CD4-positive, alpha-beta memory T cell (primary cell): ENCODE measurements at regions of chr9 and their contacts with region 1.

Region 1: GRCh38 chr9:122350638-122351355 is 20.0 kb upstream of the PTGS1 start:
- DNase-seq: peak; percentile 62 to 70 (median 65)
- H3K4me3 ChIP-seq: no peak overlapping the region
- H3K4me3 Mint-ChIP-seq: peak overlapping the region in 1 of 8 donors; percentile 23
- H3K27ac ChIP-seq: no peak overlapping the region
- H3K27ac Mint-ChIP-seq: no peak overlapping the region
- H3K4me1 ChIP-seq: peaks cover 7% of the 10 kb centered on the region
- H3K4me1 Mint-ChIP-seq: peaks cover 0 to 7% (median 3%) of the 10 kb centered on the region in 4 donors
- H3K27me3 ChIP-seq: peaks cover 13% of the 10 kb centered on the region
- H3K27me3 Mint-ChIP-seq: peaks cover 13 to 41% of the 10 kb centered on the region in 2 donors

Region 2: GRCh38 chr9:122092611-122093506 is 257.9 kb before region 1 on chr9 and contains the start of gene TTLL11:
- CTCF ChIA-PET with region 1: interaction called, 143 read pairs
- POLR2A ChIA-PET with region 1: no interaction called
- intact Hi-C with region 1: loop called (anchors 1 kb)
- DNase-seq: peak; percentile 95 to 97 (median 96)
- H3K4me3 ChIP-seq: peak within 1 kb of the TSS; percentile 56 to 62
- H3K4me3 Mint-ChIP-seq: peak within 1 kb of the TSS; percentile 87 to 97 (median 93)
- H3K27ac ChIP-seq: peak within 1 kb of the TSS; percentile 48
- H3K27ac Mint-ChIP-seq: peak within 1 kb of the TSS; percentile 63 to 94 (median 88)
- H3K4me1 ChIP-seq: peaks cover 30% of the 10 kb centered on the region
- H3K4me1 Mint-ChIP-seq: peaks cover 34 to 57% (median 39%) of the 10 kb centered on the region in 4 donors
- H3K27me3 ChIP-seq: no peaks in the 10 kb centered on the region
- H3K27me3 Mint-ChIP-seq: peaks cover 0 to 3% of the 10 kb centered on the region in 2 donors
- total RNA-seq, gene TTLL11: 2.9 to 3.2 TPM

Region 3: DNA sequence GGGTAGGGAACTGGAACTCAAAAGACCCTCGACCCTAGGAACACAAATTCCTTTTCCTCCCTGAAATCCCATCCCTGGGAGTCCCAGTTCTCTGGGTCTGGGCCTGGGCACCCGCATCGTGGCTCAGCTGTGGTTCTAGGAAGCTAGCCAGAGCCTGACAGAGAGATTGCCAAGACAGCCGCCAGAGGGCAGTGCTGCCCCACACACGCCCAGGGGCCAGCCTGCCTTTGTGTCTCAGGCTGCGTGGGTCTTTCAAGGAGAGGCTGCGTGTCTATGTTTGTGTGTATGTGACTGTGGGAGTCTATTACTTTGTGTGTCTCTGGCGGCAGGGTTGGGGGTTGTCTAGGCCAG is 225.7 kb before region 1 on chr9:
- CTCF ChIA-PET with region 1: interaction called, 165 read pairs
- POLR2A ChIA-PET with region 1: no interaction called
- intact Hi-C with region 1: no loop called
- DNase-seq: peak; percentile 65 to 75 (median 68)
- H3K4me3 ChIP-seq: no peak overlapping the region
- H3K4me3 Mint-ChIP-seq: peak overlapping the region in 6 of 8 donors; percentile 42 to 71 (median 60)
- H3K27ac ChIP-seq: no peak overlapping the region
- H3K27ac Mint-ChIP-seq: peak overlapping the region in 1 of 7 donors; percentile 26
- H3K4me1 ChIP-seq: peaks cover 7% of the 10 kb centered on the region
- H3K4me1 Mint-ChIP-seq: peaks cover 11 to 25% (median 18%) of the 10 kb centered on the region in 4 donors
- H3K27me3 ChIP-seq: peaks cover 11% of the 10 kb centered on the region
- H3K27me3 Mint-ChIP-seq: peaks cover 21 to 28% of the 10 kb centered on the region in 2 donors

Region 4: DNA sequence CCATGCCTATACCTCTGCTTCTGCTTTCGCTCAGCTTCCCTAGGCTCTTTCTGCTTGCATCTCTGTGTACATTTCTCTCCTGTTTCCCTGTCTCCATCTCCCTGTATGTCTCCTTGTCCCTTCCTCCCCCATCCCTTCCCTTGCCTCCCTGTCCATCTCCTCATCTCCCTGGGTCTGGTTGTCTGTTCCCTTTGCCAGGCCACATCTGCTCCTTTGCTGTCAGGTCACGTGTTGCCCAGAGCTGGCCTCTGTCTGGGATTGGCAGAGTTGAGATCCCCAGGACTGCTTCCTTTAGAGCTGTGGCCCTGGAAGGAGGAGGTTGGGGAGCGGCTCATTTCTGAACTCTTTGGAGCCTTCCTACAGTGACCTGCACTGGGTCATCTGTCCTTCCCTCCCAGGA is 11.8 kb before region 1 on chr9:
- CTCF ChIA-PET with region 1: interaction called, 20 read pairs
- POLR2A ChIA-PET with region 1: no interaction called
- intact Hi-C with region 1: no loop called
- DNase-seq: no peak
- H3K4me3 ChIP-seq: no peak overlapping the region
- H3K4me3 Mint-ChIP-seq: no peak overlapping the region
- H3K27ac ChIP-seq: no peak overlapping the region
- H3K27ac Mint-ChIP-seq: no peak overlapping the region
- H3K4me1 ChIP-seq: no peaks in the 10 kb centered on the region
- H3K4me1 Mint-ChIP-seq: no peaks in the 10 kb centered on the region
- H3K27me3 ChIP-seq: no peaks in the 10 kb centered on the region
- H3K27me3 Mint-ChIP-seq: peaks cover 3 to 4% of the 10 kb centered on the region in 2 donors

Region 5: DNA sequence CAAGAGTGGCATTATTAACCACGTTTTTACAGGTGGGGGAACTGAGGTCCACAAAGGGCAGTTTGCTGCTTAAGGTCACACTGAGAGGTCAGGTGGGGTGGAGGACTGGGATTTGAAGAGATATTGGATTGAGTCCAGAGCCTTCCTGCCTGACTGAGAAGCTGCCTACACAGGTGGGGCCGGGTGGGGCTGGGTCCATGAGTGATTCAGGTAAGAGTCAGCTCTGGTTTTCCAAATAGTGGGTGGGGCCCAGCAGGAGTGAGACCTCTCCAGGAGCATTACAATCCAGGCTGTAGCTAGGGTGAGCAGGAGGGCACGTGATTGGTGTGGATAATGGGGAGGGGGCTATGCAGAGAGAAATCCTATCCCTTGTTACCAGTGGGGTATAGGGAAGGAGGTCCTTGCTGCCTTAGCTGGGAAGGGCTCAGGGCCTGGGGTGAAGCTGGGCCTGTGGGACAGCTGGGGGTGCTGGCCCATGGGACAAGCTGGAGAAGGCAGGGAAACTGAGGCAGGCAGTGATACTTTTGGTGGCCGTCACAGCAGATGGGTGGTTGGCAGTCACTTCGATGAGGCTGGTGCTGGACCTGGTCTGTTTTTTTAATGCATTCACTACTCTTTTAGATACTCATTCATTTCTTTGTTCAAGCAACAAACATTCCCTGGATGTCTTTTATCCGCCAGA is 17.1 kb after region 1 on chr9:
- CTCF ChIA-PET with region 1: interaction called, 10 read pairs
- POLR2A ChIA-PET with region 1: no interaction called
- intact Hi-C with region 1: no loop called
- DNase-seq: no peak
- H3K4me3 ChIP-seq: no peak overlapping the region
- H3K4me3 Mint-ChIP-seq: no peak overlapping the region
- H3K27ac ChIP-seq: no peak overlapping the region
- H3K27ac Mint-ChIP-seq: no peak overlapping the region
- H3K4me1 ChIP-seq: peaks cover 10% of the 10 kb centered on the region
- H3K4me1 Mint-ChIP-seq: peaks cover 6 to 14% (median 6%) of the 10 kb centered on the region in 4 donors
- H3K27me3 ChIP-seq: peaks cover 4% of the 10 kb centered on the region
- H3K27me3 Mint-ChIP-seq: peaks cover 13 to 19% of the 10 kb centered on the region in 2 donors

Region 6: GRCh38 chr9:122784959-122785668 is 434.3 kb after region 1 on chr9:
- CTCF ChIA-PET with region 1: no interaction called
- POLR2A ChIA-PET with region 1: no interaction called
- intact Hi-C with region 1: no loop called
- DNase-seq: no peak
- H3K4me3 ChIP-seq: no peak overlapping the region
- H3K4me3 Mint-ChIP-seq: no peak overlapping the region
- H3K27ac ChIP-seq: no peak overlapping the region
- H3K27ac Mint-ChIP-seq: no peak overlapping the region
- H3K4me1 ChIP-seq: no peaks in the 10 kb centered on the region
- H3K4me1 Mint-ChIP-seq: no peaks in the 10 kb centered on the region
- H3K27me3 ChIP-seq: no peaks in the 10 kb centered on the region
- H3K27me3 Mint-ChIP-seq: no peaks in the 10 kb centered on the region

Region 7: DNA sequence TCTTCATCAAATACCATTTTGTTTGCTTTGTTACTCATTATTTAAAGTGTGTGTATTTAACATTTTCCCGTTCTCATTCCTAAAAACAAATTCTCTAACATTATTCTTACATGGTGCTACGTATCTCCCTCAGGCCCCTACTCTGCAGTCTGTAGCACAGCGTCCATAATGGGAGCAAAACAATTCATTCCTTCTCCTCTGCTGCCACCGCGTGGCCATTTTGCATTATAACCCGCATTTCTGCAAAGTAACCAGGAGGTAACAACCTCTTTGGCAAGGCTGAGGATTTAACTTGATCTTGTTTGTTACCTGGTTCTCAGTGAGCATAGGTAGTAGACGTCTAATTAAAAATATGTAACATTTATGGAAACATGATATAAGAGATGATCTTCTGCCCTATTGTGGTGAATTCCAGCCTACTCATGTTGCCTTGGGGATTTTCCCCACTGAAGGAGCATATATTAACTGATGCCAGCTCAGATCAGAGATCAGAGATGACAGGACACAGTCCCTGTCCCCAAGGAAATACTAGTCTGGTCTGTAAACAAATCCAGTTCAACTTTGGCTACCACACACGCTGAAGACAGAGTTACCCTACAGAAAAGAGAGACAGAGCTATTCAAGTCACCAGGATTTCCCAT is 459.6 kb after region 1 on chr9:
- CTCF ChIA-PET with region 1: interaction called, 13 read pairs
- POLR2A ChIA-PET with region 1: no interaction called
- intact Hi-C with region 1: loop called (anchors 1 kb)
- DNase-seq: peak; percentile 66 to 74 (median 71)
- H3K4me3 ChIP-seq: no peak overlapping the region
- H3K4me3 Mint-ChIP-seq: no peak overlapping the region
- H3K27ac ChIP-seq: no peak overlapping the region
- H3K27ac Mint-ChIP-seq: no peak overlapping the region
- H3K4me1 ChIP-seq: peaks cover 11% of the 10 kb centered on the region
- H3K4me1 Mint-ChIP-seq: peaks cover 9 to 32% (median 22%) of the 10 kb centered on the region in 4 donors
- H3K27me3 ChIP-seq: no peaks in the 10 kb centered on the region
- H3K27me3 Mint-ChIP-seq: no peaks in the 10 kb centered on the region